Aorta (tissue), 5 donors: ENCODE measurements at regions of chr10 and their contacts with region 1.

Region 1: DNA sequence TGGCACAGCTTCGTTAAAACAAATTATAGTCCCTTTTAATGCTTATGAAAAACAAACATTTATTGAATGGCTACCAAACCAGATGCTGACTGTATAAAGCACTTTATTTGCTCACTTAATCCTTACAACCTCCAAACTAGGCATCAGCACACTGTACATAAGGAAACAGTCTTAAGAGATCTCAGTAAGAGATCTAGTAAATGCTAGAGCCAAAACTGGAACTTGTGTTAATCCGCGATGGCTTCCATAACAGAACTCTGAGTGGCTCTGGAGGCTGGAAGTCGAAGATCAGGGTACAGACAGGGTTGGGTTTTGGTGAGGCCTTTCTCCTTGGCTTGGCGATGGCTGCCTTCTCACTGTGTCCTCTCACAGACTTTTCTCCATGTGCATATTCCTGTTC is 27.0 kb downstream of the PDZD8 start:
- DNase-seq: no peak
- ATAC-seq: no peak
- H3K4me3 ChIP-seq: no peak overlapping the region
- H3K27ac ChIP-seq: no peak overlapping the region
- H3K4me1 ChIP-seq: no peaks in the 10 kb centered on the region
- H3K27me3 ChIP-seq: no peaks in the 10 kb centered on the region

Region 2: GRCh38 chr10:116408719-116409118 is 939.5 kb before region 1 on chr10:
- intact Hi-C with region 1: no loop called
- DNase-seq: no peak
- ATAC-seq: no peak
- H3K4me3 ChIP-seq: no peak overlapping the region
- H3K27ac ChIP-seq: no peak overlapping the region
- H3K4me1 ChIP-seq: no peaks in the 10 kb centered on the region
- H3K27me3 ChIP-seq: no peaks in the 10 kb centered on the region

Region 3: GRCh38 chr10:117312430-117312829 is 35.8 kb before region 1 on chr10:
- intact Hi-C with region 1: loop called in 1 of 2 experiments (anchors 2 kb)
- DNase-seq: no peak
- ATAC-seq: no peak
- H3K4me3 ChIP-seq: no peak overlapping the region
- H3K27ac ChIP-seq: no peak overlapping the region
- H3K4me1 ChIP-seq: no peaks in the 10 kb centered on the region
- H3K27me3 ChIP-seq: no peaks in the 10 kb centered on the region